ENCODE measurements at regions of chr20 and their contacts with region 1.

Region 1: DNA sequence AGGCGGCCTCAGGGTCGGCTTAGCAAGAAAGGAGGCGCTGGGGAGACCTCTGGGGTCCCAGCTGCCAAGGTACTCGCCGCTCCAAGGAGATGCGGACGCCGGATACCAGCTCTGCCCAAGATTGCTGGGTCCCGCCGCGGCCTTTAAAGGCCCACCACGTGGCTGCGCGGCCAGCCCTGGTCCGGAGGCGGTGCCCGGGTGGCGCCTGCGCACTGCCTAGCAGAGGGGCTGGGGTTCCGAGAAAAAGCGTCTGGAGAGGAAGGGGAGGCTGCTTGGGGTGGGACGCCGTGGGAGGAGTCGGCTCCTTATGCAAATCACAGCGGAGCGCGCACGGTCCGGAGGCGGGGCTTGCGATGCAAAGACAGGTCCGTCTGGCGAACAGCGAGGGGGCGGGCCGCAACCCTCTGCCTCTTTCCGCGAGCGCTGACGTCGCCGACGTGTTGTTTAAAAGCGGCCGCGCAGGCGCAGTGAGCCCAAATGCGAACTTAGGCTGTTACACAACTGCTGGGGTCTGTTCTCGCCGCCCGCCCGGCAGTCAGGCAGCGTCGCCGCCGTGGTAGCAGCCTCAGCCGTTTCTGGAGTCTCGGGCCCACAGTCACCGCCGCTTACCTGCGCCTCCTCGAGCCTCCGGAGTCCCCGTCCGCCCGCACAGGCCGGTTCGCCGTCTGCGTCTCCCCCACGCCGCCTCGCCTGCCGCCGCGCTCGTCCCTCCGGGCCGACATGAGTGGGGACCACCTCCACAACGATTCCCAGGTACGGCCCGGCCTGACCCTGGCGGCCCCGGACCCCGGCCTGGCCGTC is at the start of gene TOP1:
- DNase-seq: peak; percentile 98
- ATAC-seq: peak; percentile 93
- H3K4me3 ChIP-seq: peak within 1 kb of the TSS; percentile 97
- H3K27ac ChIP-seq: peak within 1 kb of the TSS; percentile 95
- H3K4me1 ChIP-seq: peaks cover 5% of the 10 kb centered on the region
- H3K27me3 ChIP-seq: no peaks in the 10 kb centered on the region
- CTCF ChIP-seq: no peak
- EP300 ChIP-seq: no peak
- POLR2A ChIP-seq: peak; percentile 96
- RAD21 ChIP-seq: no peak
- polyA plus RNA-seq, gene TOP1: 36.1 to 47.6 TPM

Region 2: GRCh38 chr20:40868551-40869217 is 159.9 kb before region 1 on chr20:
- CTCF ChIA-PET with region 1: no interaction called
- POLR2A ChIA-PET with region 1: no interaction called
- RAD21 ChIA-PET with region 1: no interaction called
- SMC1A ChIA-PET with region 1: no interaction called
- in situ Hi-C with region 1: no loop called
- intact Hi-C with region 1: no loop called
- DNase-seq: no peak
- ATAC-seq: no peak
- H3K4me3 ChIP-seq: no peak overlapping the region
- H3K27ac ChIP-seq: no peak overlapping the region
- H3K4me1 ChIP-seq: no peaks in the 10 kb centered on the region
- H3K27me3 ChIP-seq: peaks cover 0 to 4% of the 10 kb centered on the region in 2 experiments; a peak in 2 of 4 replicates
- CTCF ChIP-seq: no peak
- EP300 ChIP-seq: no peak
- POLR2A ChIP-seq: no peak
- RAD21 ChIP-seq: no peak

Region 3: DNA sequence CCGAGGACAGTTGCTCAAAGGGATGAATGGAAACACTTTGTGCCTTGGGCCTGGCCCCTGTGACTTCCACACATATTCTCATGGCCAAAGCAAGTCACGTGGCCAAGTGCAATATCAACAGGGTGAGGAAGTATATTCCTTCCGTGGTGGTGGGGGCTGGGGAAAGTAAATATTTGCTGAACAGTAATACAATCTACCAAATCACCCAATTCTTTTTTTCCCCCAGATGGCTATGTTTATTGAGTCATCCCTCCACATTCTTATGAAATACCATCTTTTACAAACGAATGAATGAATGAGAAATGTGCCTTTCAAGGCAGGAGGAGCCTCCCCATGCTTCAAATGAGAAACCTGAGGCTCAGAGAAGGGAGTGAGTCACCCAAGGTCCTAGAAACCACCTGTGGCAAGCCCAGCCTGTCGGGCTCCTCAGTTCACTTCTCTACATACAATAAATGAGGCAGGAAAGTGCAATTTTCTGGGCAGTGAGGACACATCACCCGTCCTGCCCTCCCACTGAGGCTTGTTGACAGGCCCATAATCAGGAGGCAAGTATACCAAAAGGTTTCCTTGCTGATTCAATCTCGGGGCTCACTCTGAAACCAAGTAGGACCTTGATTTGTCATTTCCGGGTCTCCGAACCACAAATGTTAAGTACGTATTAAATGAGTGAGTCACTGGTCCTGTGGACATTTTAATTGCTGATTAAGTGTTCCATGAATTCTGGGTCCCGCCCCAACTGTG is 25.2 kb before region 1 on chr20:
- CTCF ChIA-PET with region 1: no interaction called
- POLR2A ChIA-PET with region 1: interaction called, 3 read pairs
- RAD21 ChIA-PET with region 1: interaction called, 3 read pairs
- SMC1A ChIA-PET with region 1: interaction called, 104 read pairs
- in situ Hi-C with region 1: no loop called
- intact Hi-C with region 1: no loop called
- DNase-seq: no peak
- ATAC-seq: peak; percentile 81
- H3K4me3 ChIP-seq: no peak overlapping the region
- H3K27ac ChIP-seq: peak overlapping the region; percentile 78
- H3K4me1 ChIP-seq: peaks cover 27% of the 10 kb centered on the region
- H3K27me3 ChIP-seq: no peaks in the 10 kb centered on the region
- CTCF ChIP-seq: no peak
- EP300 ChIP-seq: no peak
- POLR2A ChIP-seq: no peak
- RAD21 ChIP-seq: no peak

Region 4: DNA sequence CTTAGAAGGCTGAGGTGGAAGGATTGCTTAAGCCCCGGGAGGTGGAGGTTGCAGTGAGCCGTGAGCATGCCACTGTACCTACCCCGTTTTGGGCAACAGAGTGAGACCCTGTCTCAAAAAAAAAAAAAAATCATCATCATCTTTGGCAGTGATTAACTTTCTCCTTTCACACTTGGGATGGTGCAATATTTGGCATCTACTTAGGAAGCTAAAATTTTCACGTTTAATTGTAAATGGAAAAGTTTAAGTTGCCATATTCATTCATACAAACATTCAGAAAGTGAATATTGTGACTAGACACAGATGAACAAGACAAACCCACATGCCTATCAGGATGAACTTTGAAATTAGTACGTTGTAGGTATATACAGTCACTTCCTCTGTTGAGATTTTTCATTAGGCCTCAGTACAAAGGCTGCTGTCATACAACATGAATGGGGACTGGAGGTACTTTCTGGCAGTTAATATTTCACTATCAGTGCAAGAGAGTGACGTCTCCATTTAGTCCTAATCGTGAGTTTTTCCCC is 10.4 kb after region 1 on chr20:
- CTCF ChIA-PET with region 1: interaction called, 98 read pairs
- POLR2A ChIA-PET with region 1: interaction called, 214 read pairs
- RAD21 ChIA-PET with region 1: interaction called, 111 read pairs
- SMC1A ChIA-PET with region 1: interaction called, 178 read pairs
- in situ Hi-C with region 1: no loop called
- intact Hi-C with region 1: no loop called
- DNase-seq: no peak
- ATAC-seq: peak; percentile 90
- H3K4me3 ChIP-seq: no peak overlapping the region
- H3K27ac ChIP-seq: 0 out of 2 replicates have a peak overlapping the region, but pooled peaks have one; percentile 23
- H3K4me1 ChIP-seq: no peaks in the 10 kb centered on the region
- H3K27me3 ChIP-seq: no peaks in the 10 kb centered on the region
- CTCF ChIP-seq: no peak
- EP300 ChIP-seq: peak; percentile 31 to 77; a peak in 3 of 4 replicates
- POLR2A ChIP-seq: no peak
- RAD21 ChIP-seq: no peak

Region 5: DNA sequence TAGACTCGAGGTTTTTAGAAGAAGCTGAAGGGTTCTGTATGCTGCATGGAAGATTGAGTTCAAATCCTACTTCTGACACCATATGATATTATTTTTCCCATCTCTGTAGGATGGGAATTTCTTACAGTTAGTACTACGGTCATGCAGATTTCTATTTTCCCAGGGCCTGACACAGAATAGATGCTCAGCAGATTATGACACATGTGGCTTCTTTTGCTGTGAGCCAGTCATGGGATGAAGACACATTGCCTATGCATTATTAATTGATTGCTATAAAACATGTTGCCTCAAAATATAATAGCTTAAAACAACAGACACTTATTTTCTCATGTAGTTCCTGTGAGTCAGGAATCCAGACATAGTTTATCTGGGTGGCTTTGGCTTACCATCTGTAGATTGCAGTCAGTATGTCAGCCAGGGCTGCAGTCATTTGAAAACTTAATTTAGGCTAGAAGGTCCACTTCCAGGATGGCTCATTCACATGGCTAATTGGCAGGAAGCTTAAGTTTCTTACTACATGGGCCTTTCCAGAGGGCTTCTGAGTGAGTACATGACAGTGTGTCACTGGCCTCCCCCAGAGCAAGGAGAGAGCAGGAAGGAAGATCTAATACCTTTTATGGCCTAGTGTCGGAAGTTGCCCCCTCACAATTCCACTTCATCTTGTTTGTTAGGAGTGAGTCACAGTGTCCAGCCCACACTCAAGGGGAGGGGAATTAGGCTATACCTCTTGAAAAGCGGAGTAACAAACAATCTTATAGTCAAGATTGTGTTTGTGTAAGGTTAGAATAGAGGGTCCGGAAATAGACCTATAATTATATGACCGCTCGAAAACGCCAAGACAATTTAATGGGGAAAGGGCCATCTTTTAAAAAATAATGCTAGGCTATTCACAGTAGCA is 29.7 kb after region 1 on chr20:
- CTCF ChIA-PET with region 1: interaction called, 32 read pairs
- POLR2A ChIA-PET with region 1: interaction called, 4 read pairs
- RAD21 ChIA-PET with region 1: interaction called, 15 read pairs
- SMC1A ChIA-PET with region 1: interaction called, 37 read pairs
- in situ Hi-C with region 1: no loop called
- intact Hi-C with region 1: no loop called
- DNase-seq: no peak
- ATAC-seq: peak; percentile 76
- H3K4me3 ChIP-seq: no peak overlapping the region
- H3K27ac ChIP-seq: no peak overlapping the region
- H3K4me1 ChIP-seq: peaks cover 8% of the 10 kb centered on the region
- H3K27me3 ChIP-seq: no peaks in the 10 kb centered on the region
- CTCF ChIP-seq: no peak
- EP300 ChIP-seq: no peak
- POLR2A ChIP-seq: no peak
- RAD21 ChIP-seq: no peak

Region 6: GRCh38 chr20:41078329-41078728 is 49.8 kb after region 1 on chr20:
- CTCF ChIA-PET with region 1: interaction called, 4 read pairs
- POLR2A ChIA-PET with region 1: interaction called, 3 read pairs
- RAD21 ChIA-PET with region 1: interaction called, 3 read pairs
- SMC1A ChIA-PET with region 1: interaction called, 3 read pairs
- in situ Hi-C with region 1: no loop called
- intact Hi-C with region 1: loop called (anchors 5 kb)
- DNase-seq: peak; percentile 21
- ATAC-seq: peak; percentile 71
- H3K4me3 ChIP-seq: no peak overlapping the region
- H3K27ac ChIP-seq: no peak overlapping the region
- H3K4me1 ChIP-seq: peaks cover 12% of the 10 kb centered on the region
- H3K27me3 ChIP-seq: no peaks in the 10 kb centered on the region
- CTCF ChIP-seq: peak in 2 of 3 experiments; percentile 20 to 21; a peak in 1 of 6 replicates
- EP300 ChIP-seq: no peak
- POLR2A ChIP-seq: no peak
- RAD21 ChIP-seq: peak; percentile 50

Measured in GM12878 (cell line).